Activated T-helper 2 cell treated with anti-CD3 and anti-CD28 coated beads, Interferon-gamma antibody, Interleukin-2, Interleukin-4, amounts not matched to agents 10 μg/mL and 5 μg/mL and 100 μg/mL, durations not matched to agents 14 hours and 24 hours and 36 hours (primary cell): ENCODE measurements at regions of chr2 and their contacts with region 1.

Region 1: DNA sequence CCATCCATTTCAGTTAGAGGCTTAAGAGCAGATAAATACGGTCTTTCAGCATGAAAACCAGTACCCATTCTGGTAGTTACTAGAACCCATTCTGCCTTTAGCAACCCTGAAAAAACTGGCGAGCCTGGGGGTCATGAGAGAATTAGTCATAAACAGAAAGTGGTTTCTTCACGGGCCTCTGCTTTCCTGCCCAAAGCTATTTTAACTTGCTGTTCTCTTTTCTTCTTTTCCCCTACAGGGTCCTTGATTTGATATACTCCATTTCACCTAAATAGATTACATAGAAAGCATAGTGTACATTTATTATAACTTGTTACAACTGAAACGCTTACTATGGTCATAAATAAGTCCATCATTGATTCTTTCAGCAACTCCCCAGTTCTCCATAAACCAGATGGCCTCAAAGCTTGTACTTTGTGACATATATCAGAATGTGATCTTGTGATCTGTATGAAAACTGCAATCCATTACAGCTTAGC is 48.3 kb downstream of the WDFY1 start:
- DNase-seq: no peak
- H3K4me3 Mint-ChIP-seq: no peak overlapping the region
- H3K27ac Mint-ChIP-seq: peak overlapping the region; percentile 65
- H3K4me1 Mint-ChIP-seq: peaks cover 27% of the 10 kb centered on the region
- H3K27me3 Mint-ChIP-seq: no peaks in the 10 kb centered on the region

Region 2: GRCh38 chr2:223837287-223838061 is 59.4 kb before region 1 on chr2 and contains the start of gene AP1S3:
- intact Hi-C with region 1: loop called (anchors 1 kb)
- DNase-seq: peak; percentile 67
- H3K4me3 Mint-ChIP-seq: peak within 1 kb of the TSS; percentile 92
- H3K27ac Mint-ChIP-seq: peak within 1 kb of the TSS; percentile 82
- H3K4me1 Mint-ChIP-seq: peaks cover 17% of the 10 kb centered on the region
- H3K27me3 Mint-ChIP-seq: no peaks in the 10 kb centered on the region
- total RNA-seq, gene AP1S3: 12.7 and 13.9 TPM in 2 replicates

Region 3: GRCh38 chr2:223854741-223855140 is 42.1 kb before region 1 on chr2:
- intact Hi-C with region 1: loop called (anchors 5 kb)
- DNase-seq: no peak
- H3K4me3 Mint-ChIP-seq: no peak overlapping the region
- H3K27ac Mint-ChIP-seq: no peak overlapping the region
- H3K4me1 Mint-ChIP-seq: peaks cover 23% of the 10 kb centered on the region
- H3K27me3 Mint-ChIP-seq: no peaks in the 10 kb centered on the region

Region 4: GRCh38 chr2:223860809-223861738 is 35.8 kb before region 1 on chr2:
- intact Hi-C with region 1: loop called (anchors 2 kb)
- DNase-seq: no peak
- H3K4me3 Mint-ChIP-seq: no peak overlapping the region
- H3K27ac Mint-ChIP-seq: no peak overlapping the region
- H3K4me1 Mint-ChIP-seq: peaks cover 20% of the 10 kb centered on the region
- H3K27me3 Mint-ChIP-seq: no peaks in the 10 kb centered on the region